ENCODE measurements at regions of chr20 and their contacts with region 1.

Region 1: GRCh38 chr20:33686100-33686983 is at the start of gene E2F1:
- DNase-seq: peak; percentile 95
- ATAC-seq: peak; percentile 96
- H3K4me3 ChIP-seq: peak within 1 kb of the TSS; percentile 28 to 56 (median 47)
- H3K4me3 Mint-ChIP-seq: peak within 1 kb of the TSS; percentile 92
- H3K27ac ChIP-seq: peak within 1 kb of the TSS; percentile 50 to 65
- H3K27ac Mint-ChIP-seq: peak within 1 kb of the TSS; percentile 89
- H3K4me1 ChIP-seq: peaks cover 16 to 22% of the 10 kb centered on the region in 2 donors
- H3K4me1 Mint-ChIP-seq: peaks cover 27% of the 10 kb centered on the region
- H3K27me3 ChIP-seq: no peaks in the 10 kb centered on the region
- H3K27me3 Mint-ChIP-seq: no peaks in the 10 kb centered on the region
- CTCF ChIP-seq: peak; percentile 33
- total RNA-seq, gene E2F1: 2.4 and 2.7 TPM in 2 replicates

Region 2: GRCh38 chr20:33408716-33409654 is 277.4 kb before region 1 on chr20:
- CTCF ChIA-PET with region 1: no interaction called
- POLR2A ChIA-PET with region 1: no interaction called
- intact Hi-C with region 1: loop called (anchors 1 kb)
- DNase-seq: peak; percentile 83
- ATAC-seq: peak; percentile 90
- H3K4me3 ChIP-seq: peak overlapping the region in 3 of 5 experiments; percentile 25 to 35 (median 29)
- H3K4me3 Mint-ChIP-seq: peak overlapping the region; percentile 81
- H3K27ac ChIP-seq: peak overlapping the region; percentile 57 to 75
- H3K27ac Mint-ChIP-seq: peak overlapping the region; percentile 96
- H3K4me1 ChIP-seq: peaks cover 26 to 43% of the 10 kb centered on the region in 2 donors
- H3K4me1 Mint-ChIP-seq: peaks cover 46% of the 10 kb centered on the region
- H3K27me3 ChIP-seq: no peaks in the 10 kb centered on the region
- H3K27me3 Mint-ChIP-seq: no peaks in the 10 kb centered on the region
- CTCF ChIP-seq: no peak

Region 3: GRCh38 chr20:33674295-33675135 is 11.8 kb before region 1 on chr20 and contains the start of gene NECAB3:
- CTCF ChIA-PET with region 1: interaction called, 3 read pairs
- POLR2A ChIA-PET with region 1: interaction called, 6 read pairs
- intact Hi-C with region 1: loop called (anchors 1 kb)
- DNase-seq: peak; percentile 71
- ATAC-seq: peak; percentile 94
- H3K4me3 ChIP-seq: peak within 1 kb of the TSS; percentile 36 to 66 (median 51)
- H3K4me3 Mint-ChIP-seq: peak within 1 kb of the TSS; percentile 84
- H3K27ac ChIP-seq: no peak within 1 kb of the TSS
- H3K27ac Mint-ChIP-seq: peak within 1 kb of the TSS; percentile 57
- H3K4me1 ChIP-seq: peaks cover 23 to 28% of the 10 kb centered on the region in 2 donors
- H3K4me1 Mint-ChIP-seq: peaks cover 30% of the 10 kb centered on the region
- H3K27me3 ChIP-seq: no peaks in the 10 kb centered on the region
- H3K27me3 Mint-ChIP-seq: no peaks in the 10 kb centered on the region
- CTCF ChIP-seq: no peak
- total RNA-seq, gene NECAB3: 11.8 and 19.3 TPM in 2 replicates

Measured in B cell (primary cell).